ENCODE measurements at regions of chr17 and their contacts with region 1.

Region 1: DNA sequence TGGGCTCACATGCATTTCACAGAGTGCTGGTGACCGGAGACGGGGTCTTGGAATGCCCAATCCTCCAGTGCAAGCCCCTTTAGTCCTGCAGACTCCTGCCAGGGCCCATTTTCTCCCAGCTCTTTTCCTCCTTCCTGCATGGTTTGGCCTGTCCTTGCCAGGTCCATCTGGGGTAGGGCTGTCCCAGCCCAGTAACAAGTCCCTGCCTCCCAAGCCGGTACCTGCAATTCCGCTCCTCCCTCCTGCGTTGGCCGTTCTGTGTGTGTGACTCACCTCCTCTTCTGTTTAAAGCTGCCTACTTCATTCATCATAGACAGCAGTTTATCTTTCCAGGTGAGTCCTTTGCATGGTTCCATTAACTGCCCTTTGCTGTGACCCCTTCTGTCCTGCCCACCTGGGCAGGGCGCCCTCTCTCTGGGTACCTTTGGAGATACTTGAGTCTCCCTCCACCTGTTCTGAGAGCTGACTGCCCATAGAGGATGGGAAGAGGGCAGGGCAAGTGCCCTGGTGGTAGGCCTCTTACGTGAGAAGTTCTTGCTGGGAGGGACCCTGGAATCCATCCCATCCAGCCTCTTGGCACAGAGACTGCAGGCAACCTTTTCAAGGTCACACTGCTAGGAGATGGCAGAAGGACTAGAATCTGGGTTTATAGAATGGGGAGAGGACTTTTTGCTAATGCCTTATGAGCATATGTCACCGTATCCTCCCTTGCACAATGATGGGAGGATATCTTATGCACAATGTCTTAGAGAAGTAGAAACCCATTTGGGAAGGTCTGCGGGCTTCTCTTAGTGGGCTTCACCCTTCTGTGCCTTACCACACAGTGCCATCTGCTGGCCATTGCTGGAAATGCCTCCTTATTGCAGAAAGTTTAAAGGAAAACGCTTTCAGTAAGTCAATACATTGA is 29.7 kb upstream of the LGALS9 start:
- DNase-seq: peak; percentile 83
- ATAC-seq: peak; percentile 55 to 59

Region 2: GRCh38 chr17:27245230-27245696 is 356.1 kb before region 1 on chr17:
- intact Hi-C with region 1: loop called (anchors 2 to 5 kb)
- DNase-seq: peak; percentile 91
- ATAC-seq: peak; percentile 92 to 93

Region 3: DNA sequence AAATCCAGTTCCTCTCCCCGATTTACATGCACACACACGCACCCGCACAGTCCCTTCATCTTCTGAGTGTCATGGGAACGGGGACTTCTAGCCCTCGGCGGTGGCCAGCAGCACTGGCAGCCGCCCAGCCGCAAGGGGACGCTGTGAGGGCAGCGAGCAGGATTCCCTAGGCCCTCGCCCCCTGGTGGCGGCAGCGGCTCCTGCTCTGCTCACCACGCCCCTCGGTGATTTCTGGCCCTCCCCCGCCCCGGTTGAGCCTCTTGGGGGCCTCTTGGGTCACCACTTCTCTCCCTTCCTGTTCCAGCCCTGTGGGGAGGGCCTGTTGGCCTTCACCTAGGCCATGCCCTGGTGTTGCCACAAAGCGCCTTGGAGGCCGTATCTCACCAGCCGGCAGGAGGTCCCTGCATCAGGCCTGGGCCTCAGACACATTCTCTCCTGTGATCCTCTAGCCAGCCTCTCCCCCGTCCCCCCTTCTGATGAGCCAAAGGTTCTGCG is 220.3 kb before region 1 on chr17:
- intact Hi-C with region 1: loop called in 1 of 2 experiments (anchors 10 kb)
- DNase-seq: peak; percentile 78
- ATAC-seq: peak; percentile 56

Region 4: DNA sequence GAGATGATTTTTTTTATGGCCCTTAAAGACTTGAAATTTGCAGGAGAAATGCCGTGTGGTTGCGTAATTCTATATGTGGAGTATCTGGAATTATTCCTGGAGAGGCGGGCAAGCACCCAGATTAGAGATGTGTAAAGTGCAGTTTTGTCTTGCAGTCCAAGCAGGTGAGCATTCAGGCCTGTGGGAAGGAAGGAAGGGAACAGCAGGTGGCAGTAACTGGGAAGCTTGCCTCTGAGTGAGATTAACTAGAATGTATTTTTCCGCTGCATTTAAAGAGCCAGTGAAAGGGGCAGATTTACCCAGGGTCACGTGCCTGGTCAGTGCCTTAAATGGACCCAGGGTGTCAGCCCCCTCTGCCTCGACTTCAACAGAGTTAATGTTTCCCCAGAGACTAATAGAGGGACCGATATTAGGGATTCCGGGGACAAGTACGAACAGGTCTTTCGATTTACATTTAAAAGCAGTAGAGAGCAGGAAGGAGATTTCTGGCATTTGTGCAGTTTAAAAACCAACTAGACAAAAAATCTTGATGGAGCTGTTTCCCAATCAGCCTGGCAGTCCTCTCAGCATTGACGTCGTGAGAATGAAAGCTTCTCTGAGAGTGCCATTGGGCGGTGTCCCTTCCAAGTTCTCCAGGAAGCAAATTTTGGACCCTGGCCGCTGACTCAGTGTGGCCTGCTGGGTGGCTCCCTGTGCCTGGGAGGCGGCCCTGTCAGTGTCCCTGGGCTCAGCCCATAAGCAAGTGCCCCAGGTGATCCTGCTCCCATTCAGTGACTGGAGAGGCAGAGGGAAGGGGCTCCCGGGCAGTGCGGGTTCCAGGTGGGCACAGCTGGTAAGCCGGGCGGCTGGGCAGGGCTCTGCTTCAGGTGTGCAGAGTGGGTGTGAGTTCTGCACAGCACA is 106.9 kb before region 1 on chr17:
- intact Hi-C with region 1: loop called (anchors 5 to 10 kb)
- DNase-seq: peak; percentile 85
- ATAC-seq: peak; percentile 81 to 85

Region 5: DNA sequence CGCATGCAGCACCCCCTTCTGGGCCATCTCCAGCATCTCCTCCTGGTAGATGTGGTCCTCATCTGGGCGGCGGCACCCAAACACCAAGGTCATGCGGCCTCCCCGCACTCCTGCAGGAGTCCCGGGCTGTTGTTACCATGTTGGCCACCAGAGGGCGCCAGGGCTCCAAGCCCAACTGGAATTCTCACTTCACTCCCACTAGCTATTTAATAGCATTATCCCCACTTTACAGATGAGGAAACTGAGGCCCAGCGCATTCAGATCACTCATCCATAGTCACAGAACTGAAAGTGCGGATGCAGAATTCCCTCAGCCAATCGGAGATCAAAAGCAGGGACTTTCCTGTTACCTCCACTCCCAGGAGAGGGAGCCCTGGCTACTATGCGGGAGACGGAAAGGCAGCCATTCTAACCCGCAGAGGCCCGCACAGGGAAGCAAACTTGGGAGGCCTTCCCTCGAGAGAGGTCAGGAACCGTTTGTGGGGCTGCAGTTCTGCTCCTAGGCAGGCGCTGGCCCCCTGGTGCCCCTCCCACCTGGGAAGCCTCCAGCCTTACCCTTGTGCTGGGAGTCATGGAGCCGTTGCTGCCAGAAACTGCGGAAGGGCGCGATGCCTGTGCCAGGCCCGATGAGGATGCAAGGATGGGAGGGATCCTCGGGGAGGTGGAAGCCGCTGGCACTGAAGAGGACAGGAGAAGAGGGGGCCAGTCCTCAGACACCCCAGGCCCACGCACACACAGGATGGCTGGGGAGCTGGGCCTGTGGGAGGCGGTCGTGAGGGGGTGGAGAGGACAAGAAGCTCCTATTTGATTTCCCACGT is 159.0 kb after region 1 on chr17:
- intact Hi-C with region 1: loop called (anchors 5 to 10 kb)
- DNase-seq: peak; percentile 69
- ATAC-seq: peak; percentile 50 to 53